ENCODE measurements at regions of chr17 and their contacts with region 1.

Region 1: DNA sequence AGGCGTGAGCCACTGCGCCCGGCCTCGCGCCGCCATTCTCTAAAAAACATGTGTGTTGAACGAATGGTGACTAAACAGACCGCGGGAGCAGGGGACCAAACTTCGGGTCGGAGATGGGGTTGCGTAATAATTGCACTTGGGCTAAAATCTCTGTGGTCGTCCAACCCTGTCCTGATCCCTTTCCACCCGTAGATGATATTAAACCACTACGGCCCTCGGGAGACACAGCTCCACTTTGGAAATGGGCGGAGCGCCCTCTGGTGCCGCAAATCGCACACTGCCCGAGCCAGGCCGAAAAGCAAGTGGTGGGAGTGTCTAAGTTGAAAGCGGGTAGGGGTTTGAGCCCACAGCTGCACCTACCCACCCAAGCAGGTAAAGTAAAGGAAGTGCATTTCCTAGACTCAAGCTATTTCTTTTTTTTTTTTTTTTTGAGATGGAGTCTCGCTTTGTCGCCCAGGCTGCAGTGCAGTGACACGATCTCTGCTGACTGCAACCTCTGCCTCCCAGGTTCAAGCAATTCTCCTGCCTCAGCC is 17.0 kb downstream of the CAVIN1 start:
- DNase-seq: peak; percentile 67 to 87 (median 74)
- H3K4me3 ChIP-seq: no peak overlapping the region
- H3K4me3 Mint-ChIP-seq: peak overlapping the region in 1 of 7 donors; percentile 78
- H3K27ac ChIP-seq: no peak overlapping the region
- H3K27ac Mint-ChIP-seq: peak overlapping the region in 2 of 8 donors; percentile 17 to 41
- H3K4me1 ChIP-seq: peaks cover 9% of the 10 kb centered on the region
- H3K4me1 Mint-ChIP-seq: peaks cover 6 to 11% (median 9%) of the 10 kb centered on the region in 3 donors
- H3K27me3 ChIP-seq: no peaks in the 10 kb centered on the region
- H3K27me3 Mint-ChIP-seq: peaks cover 0 to 2% of the 10 kb centered on the region in 2 donors

Region 2: DNA sequence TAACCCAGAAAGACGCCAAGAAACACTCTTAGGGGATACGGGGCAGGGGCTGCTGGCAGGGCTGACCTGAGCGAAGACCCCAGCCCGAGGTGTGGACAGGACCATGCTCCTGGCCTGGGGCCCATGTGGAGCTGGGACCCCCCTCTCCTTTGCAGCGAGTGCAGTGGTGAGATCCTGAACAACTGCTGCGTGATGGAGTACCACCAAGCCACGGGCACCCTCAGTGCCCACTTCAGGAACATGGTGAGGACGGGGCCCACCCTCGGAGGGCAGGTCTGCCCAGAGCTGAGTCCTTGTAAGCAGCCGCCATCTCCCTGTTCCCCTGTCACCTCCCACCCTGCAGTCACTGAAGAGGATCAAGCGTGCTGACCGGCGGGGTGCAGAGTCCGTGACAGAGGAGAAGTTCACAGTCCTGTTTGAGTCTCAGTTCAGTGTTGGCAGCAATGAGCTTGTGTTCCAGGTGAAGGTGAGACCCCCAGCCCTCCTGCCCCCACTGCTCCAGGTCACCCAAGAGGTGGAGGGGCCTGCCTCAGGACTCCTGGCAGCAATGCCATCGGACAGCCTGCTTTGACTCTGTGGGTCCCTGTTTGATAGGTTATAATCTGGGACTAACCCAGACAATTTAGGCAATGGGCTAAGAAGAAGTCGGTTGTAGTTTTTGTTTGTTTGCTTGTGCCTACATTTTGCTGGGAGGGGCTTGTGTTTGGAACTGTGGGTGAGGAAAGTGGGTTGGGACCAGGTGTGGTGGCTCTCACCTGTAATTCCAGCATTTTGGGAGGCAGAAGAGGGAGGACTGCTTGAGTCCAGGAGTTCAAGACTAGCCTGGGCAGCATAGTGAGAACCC is 101.6 kb before region 1 on chr17:
- CTCF ChIA-PET with region 1: interaction called, 373 read pairs
- POLR2A ChIA-PET with region 1: no interaction called
- DNase-seq: no peak
- H3K4me3 ChIP-seq: no peak overlapping the region
- H3K4me3 Mint-ChIP-seq: no peak overlapping the region
- H3K27ac ChIP-seq: no peak overlapping the region
- H3K27ac Mint-ChIP-seq: peak overlapping the region in 3 of 8 donors; percentile 12 to 57 (median 43)
- H3K4me1 ChIP-seq: peaks cover 5% of the 10 kb centered on the region
- H3K4me1 Mint-ChIP-seq: peaks cover 0 to 6% (median 0%) of the 10 kb centered on the region in 3 donors
- H3K27me3 ChIP-seq: no peaks in the 10 kb centered on the region
- H3K27me3 Mint-ChIP-seq: no peaks in the 10 kb centered on the region

Region 3: GRCh38 chr17:42322382-42323267 is 83.4 kb before region 1 on chr17:
- CTCF ChIA-PET with region 1: interaction called, 373 read pairs
- POLR2A ChIA-PET with region 1: interaction called, 3 read pairs
- DNase-seq: peak; percentile 87 to 96 (median 92)
- H3K4me3 ChIP-seq: no peak overlapping the region
- H3K4me3 Mint-ChIP-seq: no peak overlapping the region
- H3K27ac ChIP-seq: no peak overlapping the region
- H3K27ac Mint-ChIP-seq: peak overlapping the region; percentile 22 to 96 (median 69)
- H3K4me1 ChIP-seq: peaks cover 26% of the 10 kb centered on the region
- H3K4me1 Mint-ChIP-seq: peaks cover 25 to 31% (median 26%) of the 10 kb centered on the region in 3 donors
- H3K27me3 ChIP-seq: no peaks in the 10 kb centered on the region
- H3K27me3 Mint-ChIP-seq: no peaks in the 10 kb centered on the region

Region 4: DNA sequence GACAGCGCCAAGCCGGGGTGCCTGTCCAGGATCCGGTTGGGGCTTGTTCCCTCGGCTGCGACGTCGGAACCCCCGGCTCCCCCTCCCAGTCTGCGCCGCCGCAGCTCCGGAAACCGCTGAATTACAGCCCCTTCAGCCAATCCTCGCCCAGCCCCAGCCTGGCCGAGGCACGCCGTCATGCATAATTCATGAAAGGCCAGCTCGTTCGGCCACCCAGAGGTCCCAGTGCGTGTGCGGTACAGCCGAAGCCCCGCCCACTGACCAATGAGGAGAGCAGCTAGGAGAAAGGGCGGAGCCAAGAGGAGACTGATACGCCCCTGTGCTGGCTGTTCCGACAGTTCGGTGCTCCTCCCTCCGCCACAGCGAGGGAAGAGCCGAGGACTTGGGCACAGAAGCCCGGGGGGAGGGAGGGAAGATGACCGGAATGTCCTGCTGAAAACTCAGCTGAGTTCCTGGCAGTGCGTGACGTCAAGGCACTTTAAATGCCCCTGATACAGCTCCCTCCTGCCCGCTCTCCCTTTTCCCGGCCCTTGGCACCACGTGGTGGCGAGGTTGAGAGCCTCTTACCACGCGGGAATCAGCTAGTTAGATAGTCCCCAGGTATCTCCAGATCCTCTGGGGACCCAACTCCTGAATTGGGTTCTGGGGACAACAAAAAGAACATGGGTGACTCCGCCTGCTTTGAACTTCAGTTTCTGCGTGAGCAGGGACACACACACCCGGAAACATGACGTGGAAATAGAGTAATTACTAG is 17.5 kb before region 1 on chr17 and contains the start of gene STAT3:
- CTCF ChIA-PET with region 1: interaction called, 29 read pairs
- POLR2A ChIA-PET with region 1: interaction called, 4 read pairs
- DNase-seq: peak; percentile 100
- H3K4me3 ChIP-seq: peak within 1 kb of the TSS; percentile 94
- H3K4me3 Mint-ChIP-seq: peak within 1 kb of the TSS; percentile 88 to 99 (median 94)
- H3K27ac ChIP-seq: peak within 1 kb of the TSS; percentile 100
- H3K27ac Mint-ChIP-seq: peak within 1 kb of the TSS; percentile 99 to 100 (median 100)
- H3K4me1 ChIP-seq: peaks cover 33% of the 10 kb centered on the region
- H3K4me1 Mint-ChIP-seq: peaks cover 31 to 59% (median 40%) of the 10 kb centered on the region in 3 donors
- H3K27me3 ChIP-seq: no peaks in the 10 kb centered on the region
- H3K27me3 Mint-ChIP-seq: no peaks in the 10 kb centered on the region
- total RNA-seq, gene STAT3: 148 to 155 TPM